Activated naive CD4-positive, alpha-beta T cell treated with anti-CD3 and anti-CD28 coated beads for 36 hours (primary cell): ENCODE measurements at regions of chr14 and their contacts with region 1.

Region 1: DNA sequence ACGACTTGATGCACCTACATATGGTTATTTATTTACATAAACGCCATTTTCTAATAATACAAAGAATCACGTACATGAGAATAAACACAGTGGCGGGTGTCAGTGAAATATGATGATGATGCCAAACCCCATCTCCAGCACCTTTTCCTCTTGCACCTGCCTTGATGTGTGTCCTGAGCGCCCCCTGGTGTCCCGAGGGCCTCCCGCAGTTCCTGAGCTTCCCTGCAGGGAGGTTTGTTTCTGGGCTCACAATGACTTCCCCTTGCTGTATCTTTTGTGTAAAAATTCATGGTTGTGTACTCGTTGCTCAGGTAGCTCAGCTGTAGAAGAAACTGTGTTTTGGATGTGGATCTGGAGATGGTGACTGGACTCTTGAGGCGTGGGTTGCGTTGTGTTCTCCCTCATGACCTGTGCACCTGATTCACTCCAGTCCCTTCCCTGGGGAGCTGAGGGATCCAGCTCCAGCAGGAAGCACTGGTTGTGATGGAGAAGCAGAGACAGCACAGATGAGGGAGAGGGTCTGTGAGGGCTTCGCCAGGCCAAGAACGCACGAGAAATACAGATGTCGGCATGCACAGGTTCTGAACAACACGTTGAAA is 1037.8 kb downstream of the TMEM121 start:
- DNase-seq: peak; percentile 82
- H3K4me3 Mint-ChIP-seq: no peak overlapping the region
- H3K27ac Mint-ChIP-seq: no peak overlapping the region
- H3K4me1 Mint-ChIP-seq: no peaks in the 10 kb centered on the region
- H3K27me3 Mint-ChIP-seq: peaks cover 9% of the 10 kb centered on the region

Region 2: DNA sequence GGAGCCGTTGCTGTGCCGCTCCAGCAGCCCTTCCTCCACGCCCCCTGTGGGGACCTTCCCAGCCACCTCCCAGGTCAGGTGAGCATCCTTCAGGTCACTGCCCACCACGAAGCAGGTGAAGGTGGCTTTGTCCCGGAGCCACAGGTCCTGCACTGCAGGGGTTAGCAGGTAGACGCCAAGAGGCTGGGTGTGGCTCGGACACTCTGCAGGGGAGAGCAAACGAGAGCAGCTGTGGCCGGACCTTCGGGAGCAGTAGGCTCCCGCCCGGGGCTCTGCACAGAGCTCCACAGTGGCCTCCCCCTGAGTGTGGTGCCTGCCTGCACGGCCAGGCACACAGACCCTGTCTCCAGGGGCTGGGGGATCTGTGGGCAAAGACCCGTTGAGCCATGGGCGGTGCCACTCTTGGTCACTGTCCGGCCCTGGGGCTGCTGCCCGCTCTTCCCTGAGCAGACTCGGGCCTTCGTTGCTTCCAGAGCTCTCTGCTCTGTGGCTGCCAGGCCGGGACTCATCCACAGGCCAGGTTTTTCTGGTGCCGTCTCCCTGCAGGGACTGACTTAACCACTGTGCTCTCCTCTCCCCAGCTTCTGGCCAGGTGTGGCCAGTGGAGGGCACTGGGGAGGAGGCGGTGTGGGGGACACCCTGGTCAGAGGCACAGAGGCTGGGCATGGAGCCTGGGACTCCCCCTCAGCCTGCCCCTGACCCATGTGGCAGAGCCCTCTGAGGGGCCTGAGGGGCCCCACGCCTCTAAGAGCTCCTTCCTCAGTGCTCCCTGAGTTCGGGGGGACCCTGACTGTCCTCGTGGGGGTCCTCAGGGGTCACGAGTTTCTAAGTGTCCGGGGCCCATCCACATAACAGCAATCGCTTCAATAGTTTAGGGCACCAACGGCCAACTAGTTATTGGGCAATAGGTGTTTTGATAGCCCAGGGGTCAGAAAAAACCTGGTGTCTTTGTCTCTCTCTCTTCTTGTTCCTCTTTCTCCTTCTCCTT is 722.8 kb before region 1 on chr14:
- CTCF ChIA-PET with region 1: no interaction called
- intact Hi-C with region 1: no loop called
- DNase-seq: no peak
- H3K4me3 Mint-ChIP-seq: no peak overlapping the region
- H3K27ac Mint-ChIP-seq: no peak overlapping the region
- H3K4me1 Mint-ChIP-seq: no peaks in the 10 kb centered on the region
- H3K27me3 Mint-ChIP-seq: no peaks in the 10 kb centered on the region

Region 3: GRCh38 chr14:106228541-106229158 is 335.5 kb before region 1 on chr14:
- CTCF ChIA-PET with region 1: no interaction called
- intact Hi-C with region 1: no loop called
- DNase-seq: peak; percentile 78
- H3K4me3 Mint-ChIP-seq: peak overlapping the region; percentile 73
- H3K27ac Mint-ChIP-seq: peak overlapping the region; percentile 91
- H3K4me1 Mint-ChIP-seq: peaks cover 68% of the 10 kb centered on the region
- H3K27me3 Mint-ChIP-seq: no peaks in the 10 kb centered on the region

Region 4: DNA sequence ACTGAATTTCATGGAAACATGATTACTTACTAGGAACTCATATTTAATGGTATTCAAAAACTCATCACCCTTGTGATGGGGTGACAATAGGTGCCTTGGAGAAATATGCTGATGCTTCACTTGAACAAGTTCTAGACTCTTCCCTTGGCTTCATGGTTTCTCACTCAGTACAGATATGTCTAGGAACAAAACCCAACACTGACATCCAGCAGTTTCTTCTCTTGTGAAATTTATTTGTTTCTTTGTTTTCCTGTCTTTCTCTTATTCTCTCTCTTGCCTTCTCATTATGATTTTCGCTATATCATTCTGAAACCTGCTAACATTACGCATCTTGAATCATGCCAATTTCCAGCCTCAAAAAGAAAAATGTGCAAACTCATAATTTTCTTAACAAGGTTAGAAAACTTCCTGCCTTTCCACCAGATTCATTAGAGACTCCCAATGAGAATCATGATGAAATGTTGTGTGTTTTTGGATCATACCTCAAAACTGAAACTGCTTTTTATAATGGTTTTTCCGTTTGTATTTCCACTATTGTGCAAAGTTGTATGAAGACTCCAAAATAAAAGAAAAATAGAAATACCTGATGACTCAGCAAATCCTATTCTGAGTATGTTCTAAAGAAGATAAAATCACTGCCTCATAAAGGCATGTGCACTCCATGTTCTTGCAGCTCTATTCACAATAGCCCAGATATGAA is 16.3 kb before region 1 on chr14:
- CTCF ChIA-PET with region 1: interaction called, 14 read pairs
- intact Hi-C with region 1: no loop called
- DNase-seq: no peak
- H3K4me3 Mint-ChIP-seq: no peak overlapping the region
- H3K27ac Mint-ChIP-seq: peak overlapping the region; percentile 54
- H3K4me1 Mint-ChIP-seq: peaks cover 9% of the 10 kb centered on the region
- H3K27me3 Mint-ChIP-seq: peaks cover 16% of the 10 kb centered on the region

Region 5: GRCh38 chr14:106729551-106729950 is 165.4 kb after region 1 on chr14:
- CTCF ChIA-PET with region 1: no interaction called
- intact Hi-C with region 1: no loop called
- DNase-seq: no peak
- H3K4me3 Mint-ChIP-seq: no peak overlapping the region
- H3K27ac Mint-ChIP-seq: no peak overlapping the region
- H3K4me1 Mint-ChIP-seq: peaks cover 8% of the 10 kb centered on the region
- H3K27me3 Mint-ChIP-seq: no peaks in the 10 kb centered on the region